Activated CD4-positive, alpha-beta T cell treated with anti-CD3 and anti-CD28 coated beads, Interleukin-2, amount 10 ng/mL, durations not matched to agents 24 days and 14 days (primary cell): ENCODE measurements at regions of chr1 and their contacts with region 1.

Region 1: GRCh38 chr1:156860113-156860627 is 495 bp upstream of the NTRK1 start:
- DNase-seq: peak; percentile 91
- H3K4me3 Mint-ChIP-seq: peak overlapping the region; percentile 80
- H3K27ac Mint-ChIP-seq: peak overlapping the region; percentile 18
- H3K4me1 Mint-ChIP-seq: peaks cover 51% of the 10 kb centered on the region
- H3K27me3 Mint-ChIP-seq: peaks cover 25% of the 10 kb centered on the region

Region 2: DNA sequence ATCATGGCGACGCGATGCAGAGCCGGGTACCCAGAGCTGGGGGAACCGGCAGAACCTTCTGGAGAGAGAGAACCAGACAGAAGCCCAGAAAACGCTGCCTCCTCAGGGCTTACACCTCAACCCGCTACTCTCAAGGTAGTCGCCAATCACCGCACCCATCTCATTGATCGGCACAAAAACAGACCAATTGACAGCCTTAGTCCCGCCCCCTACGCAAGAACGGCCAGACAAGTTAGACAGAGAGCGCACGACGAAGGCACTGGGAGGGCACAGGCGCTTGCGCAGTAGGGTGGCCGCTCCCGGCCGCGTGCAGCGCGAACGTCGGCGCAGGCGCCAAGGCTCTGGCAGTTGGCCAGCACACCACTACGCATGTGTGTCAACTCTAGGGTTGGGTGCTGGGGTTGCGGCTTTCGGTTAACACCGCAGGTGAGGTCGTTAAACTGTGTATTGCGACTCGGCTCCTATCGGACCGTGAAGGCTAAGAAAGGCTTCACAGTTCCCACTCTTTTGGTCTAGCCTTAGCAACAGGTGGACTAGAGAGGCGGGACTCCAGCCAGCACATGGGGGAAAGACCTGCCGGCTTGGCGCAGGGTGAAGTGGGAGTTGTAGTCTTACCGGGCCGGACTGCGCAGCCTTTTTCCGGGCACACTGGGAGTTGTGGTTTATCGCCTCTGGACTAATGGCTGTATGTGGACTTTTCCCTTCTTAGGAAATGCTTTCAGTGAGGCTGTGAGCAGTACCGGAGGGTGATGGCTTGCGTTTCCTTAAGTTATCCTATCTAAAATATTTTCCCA is 521.8 kb before region 1 on chr1 and contains the starts of genes CCT3 and TSACC:
- intact Hi-C with region 1: no loop called
- DNase-seq: peak; percentile 100
- H3K4me3 Mint-ChIP-seq: peak within 1 kb of the TSS; percentile 99
- H3K27ac Mint-ChIP-seq: peak within 1 kb of the TSS; percentile 97
- H3K4me1 Mint-ChIP-seq: peaks cover 26% of the 10 kb centered on the region
- H3K27me3 Mint-ChIP-seq: peaks cover 9% of the 10 kb centered on the region
- total RNA-seq, gene CCT3: 623 TPM in 2 replicates
- total RNA-seq, gene TSACC: 0.47 and 0.82 TPM in 2 replicates

Region 3: GRCh38 chr1:156705918-156706656 is 154.1 kb before region 1 on chr1:
- intact Hi-C with region 1: no loop called
- DNase-seq: peak; percentile 90
- H3K4me3 Mint-ChIP-seq: peak overlapping the region; percentile 89
- H3K27ac Mint-ChIP-seq: peak overlapping the region; percentile 72
- H3K4me1 Mint-ChIP-seq: peaks cover 20% of the 10 kb centered on the region
- H3K27me3 Mint-ChIP-seq: peaks cover 42% of the 10 kb centered on the region

Region 4: GRCh38 chr1:156892190-156893047 is 32.2 kb after region 1 on chr1:
- intact Hi-C with region 1: loop called (anchors 2 kb)
- DNase-seq: peak; percentile 96
- H3K4me3 Mint-ChIP-seq: peak overlapping the region; percentile 66
- H3K27ac Mint-ChIP-seq: no peak overlapping the region
- H3K4me1 Mint-ChIP-seq: peaks cover 13% of the 10 kb centered on the region
- H3K27me3 Mint-ChIP-seq: peaks cover 36% of the 10 kb centered on the region

Region 5: DNA sequence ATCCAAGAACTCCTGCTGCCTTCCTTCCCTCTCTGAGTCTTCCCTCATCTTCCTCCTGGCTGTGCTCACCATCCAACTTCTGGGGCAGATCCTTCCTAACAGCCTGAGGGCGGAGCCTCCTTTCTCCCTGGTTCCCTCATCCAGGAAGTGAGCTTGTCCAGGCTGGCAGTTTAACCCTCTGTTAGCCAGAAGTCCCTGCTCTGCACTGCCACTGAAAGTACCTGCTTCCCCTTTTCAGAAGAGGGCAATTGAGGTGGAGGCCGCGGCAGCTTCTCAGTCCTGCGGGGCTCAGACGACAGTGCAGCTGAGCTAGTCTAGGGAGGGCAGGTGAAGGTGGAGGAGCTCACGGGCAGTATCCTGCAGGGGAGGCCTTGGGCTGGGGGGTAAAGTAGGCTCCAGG is 543.0 kb after region 1 on chr1:
- intact Hi-C with region 1: no loop called
- DNase-seq: no peak
- H3K4me3 Mint-ChIP-seq: no peak overlapping the region
- H3K27ac Mint-ChIP-seq: no peak overlapping the region
- H3K4me1 Mint-ChIP-seq: no peaks in the 10 kb centered on the region
- H3K27me3 Mint-ChIP-seq: peaks cover 35% of the 10 kb centered on the region